ENCODE measurements at regions of chr1 and their contacts with region 1.

Region 1: GRCh38 chr1:247390116-247390791 is 25.7 kb upstream of the NLRP3 start:
- DNase-seq: peak; percentile 92
- ATAC-seq: peak; percentile 98
- H3K4me3 ChIP-seq: no peak overlapping the region
- H3K27ac ChIP-seq: no peak overlapping the region
- H3K4me1 ChIP-seq: peaks cover 33% of the 10 kb centered on the region
- H3K27me3 ChIP-seq: no peaks in the 10 kb centered on the region
- CTCF ChIP-seq: peak; percentile 92 to 95 (median 94)
- EP300 ChIP-seq: peak; percentile 57 to 91; a peak in 3 of 4 replicates
- POLR2A ChIP-seq: no peak
- RAD21 ChIP-seq: peak; percentile 94

Region 2: DNA sequence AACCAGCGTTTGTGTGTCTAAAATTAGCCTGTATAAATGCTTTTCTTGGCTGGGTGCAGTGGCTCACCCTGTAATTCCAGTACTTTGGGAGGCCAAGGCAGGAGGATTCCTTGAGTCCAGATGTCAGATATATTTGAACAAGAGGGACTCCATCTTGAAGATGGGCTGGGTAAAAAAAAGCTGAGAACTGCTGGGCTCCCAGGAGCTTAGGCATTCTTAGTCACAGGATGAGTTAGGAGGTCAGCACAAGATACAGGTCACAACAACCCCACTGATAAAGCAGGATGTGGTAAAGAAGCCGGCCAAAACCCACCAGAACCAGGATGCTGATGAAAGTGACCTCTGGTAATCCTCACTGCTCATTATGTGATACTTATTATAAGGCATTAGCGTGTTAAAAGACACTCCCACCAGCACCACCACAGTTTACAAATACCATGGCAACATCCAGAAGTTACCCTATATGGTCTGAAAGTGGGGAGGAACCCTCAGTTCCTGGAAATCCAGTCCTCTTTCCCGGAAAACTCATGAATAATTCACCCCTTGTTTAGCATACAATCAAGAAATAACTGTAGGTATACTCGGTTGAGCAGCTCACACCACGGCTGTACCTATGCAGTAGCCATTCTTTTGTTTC is 22.4 kb before region 1 on chr1:
- CTCF ChIA-PET with region 1: interaction called, 35 read pairs
- POLR2A ChIA-PET with region 1: interaction called, 3 read pairs
- RAD21 ChIA-PET with region 1: interaction called, 44 read pairs
- SMC1A ChIA-PET with region 1: interaction called, 33 read pairs
- in situ Hi-C with region 1: no loop called
- intact Hi-C with region 1: no loop called
- DNase-seq: no peak
- ATAC-seq: peak; percentile 80
- H3K4me3 ChIP-seq: no peak overlapping the region
- H3K27ac ChIP-seq: no peak overlapping the region
- H3K4me1 ChIP-seq: no peaks in the 10 kb centered on the region
- H3K27me3 ChIP-seq: no peaks in the 10 kb centered on the region
- CTCF ChIP-seq: no peak
- EP300 ChIP-seq: no peak
- POLR2A ChIP-seq: no peak
- RAD21 ChIP-seq: no peak

Region 3: DNA sequence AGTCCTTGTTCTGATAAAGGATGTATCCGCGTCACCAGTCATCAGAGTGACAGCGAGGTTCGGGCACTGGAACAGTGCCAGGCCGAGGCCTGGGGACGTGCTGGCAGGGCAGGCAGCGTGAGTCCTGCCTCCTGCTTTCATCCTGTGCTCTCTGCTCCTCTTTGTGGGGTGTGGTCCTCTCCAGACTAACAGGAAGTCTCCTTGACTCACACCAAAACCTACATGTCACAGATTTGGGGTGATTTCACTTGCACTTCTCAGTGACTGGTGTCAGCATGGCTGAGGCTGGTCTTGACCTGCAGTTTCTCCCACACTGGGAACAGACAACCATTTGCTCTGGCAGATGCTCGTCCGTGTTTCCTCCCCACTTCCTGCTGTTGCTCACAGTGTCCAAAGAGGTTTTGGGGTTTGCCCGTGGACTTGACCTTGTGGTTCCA is 16.9 kb after region 1 on chr1:
- CTCF ChIA-PET with region 1: interaction called, 18 read pairs
- POLR2A ChIA-PET with region 1: interaction called, 3 read pairs
- RAD21 ChIA-PET with region 1: interaction called, 24 read pairs
- SMC1A ChIA-PET with region 1: interaction called, 18 read pairs
- in situ Hi-C with region 1: no loop called
- intact Hi-C with region 1: loop called (anchors 1 kb)
- DNase-seq: peak; percentile 85
- ATAC-seq: peak; percentile 81
- H3K4me3 ChIP-seq: 0 out of 2 replicates have a peak overlapping the region, but pooled peaks have one; percentile 9
- H3K27ac ChIP-seq: peak overlapping the region; percentile 63
- H3K4me1 ChIP-seq: peaks cover 34% of the 10 kb centered on the region
- H3K27me3 ChIP-seq: no peaks in the 10 kb centered on the region
- CTCF ChIP-seq: no peak
- EP300 ChIP-seq: peak in 1 of 2 experiments; percentile 23; a peak in 1 of 4 replicates
- POLR2A ChIP-seq: 0 out of 2 replicates have a peak, but pooled peaks have one; percentile 21
- RAD21 ChIP-seq: no peak

Region 4: DNA sequence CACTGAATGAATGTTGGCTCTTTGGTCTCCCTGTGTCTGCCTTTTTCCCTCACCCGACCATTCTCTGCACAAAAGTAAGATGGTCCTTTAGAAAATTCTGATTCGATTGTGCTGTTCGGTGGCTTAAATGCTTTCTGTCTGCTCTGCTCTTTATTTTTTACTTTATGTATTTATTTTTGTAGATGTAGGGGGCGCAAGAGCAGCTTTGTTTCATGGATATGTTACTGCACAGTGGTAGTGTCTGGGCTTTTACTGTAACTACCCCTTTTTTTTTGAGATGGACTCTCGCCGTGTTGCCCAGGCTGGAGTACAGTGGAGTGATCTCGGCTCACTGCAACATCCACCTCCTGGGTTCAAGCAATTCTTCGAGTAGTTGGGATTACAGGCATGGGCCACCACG is 41.4 kb after region 1 on chr1:
- CTCF ChIA-PET with region 1: interaction called, 27 read pairs
- POLR2A ChIA-PET with region 1: interaction called, 7 read pairs
- RAD21 ChIA-PET with region 1: interaction called, 10 read pairs
- SMC1A ChIA-PET with region 1: interaction called, 80 read pairs
- in situ Hi-C with region 1: no loop called
- intact Hi-C with region 1: loop called (anchors 1 kb)
- DNase-seq: no peak
- ATAC-seq: no peak
- H3K4me3 ChIP-seq: no peak overlapping the region
- H3K27ac ChIP-seq: no peak overlapping the region
- H3K4me1 ChIP-seq: no peaks in the 10 kb centered on the region
- H3K27me3 ChIP-seq: no peaks in the 10 kb centered on the region
- CTCF ChIP-seq: no peak
- EP300 ChIP-seq: no peak
- POLR2A ChIP-seq: no peak
- RAD21 ChIP-seq: no peak

Region 5: DNA sequence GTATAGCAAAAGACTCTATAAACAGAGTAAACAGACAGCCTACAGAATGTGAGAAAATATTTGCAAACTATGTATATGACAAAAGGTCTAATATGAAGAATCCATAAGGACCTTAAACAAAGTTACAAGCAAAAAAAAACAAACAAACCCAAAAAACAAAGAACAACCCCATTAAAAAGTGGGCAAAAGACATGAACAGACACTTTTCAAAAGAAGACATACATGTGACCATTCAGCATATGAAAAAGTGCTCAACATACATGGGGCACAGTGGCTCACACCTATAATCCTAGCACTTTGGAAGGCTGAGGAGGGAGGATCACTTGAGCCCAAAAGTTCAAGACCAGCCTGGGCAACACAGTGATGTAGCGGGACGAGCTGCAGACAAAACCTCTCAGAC is 85.5 kb after region 1 on chr1:
- CTCF ChIA-PET with region 1: interaction called, 49 read pairs
- POLR2A ChIA-PET with region 1: interaction called, 3 read pairs
- RAD21 ChIA-PET with region 1: interaction called, 6 read pairs
- SMC1A ChIA-PET with region 1: interaction called, 13 read pairs
- in situ Hi-C with region 1: loop called (anchors 5 kb)
- intact Hi-C with region 1: no loop called
- DNase-seq: no peak
- ATAC-seq: no peak; the same call in 2 of the 3 replicates
- H3K4me3 ChIP-seq: no peak overlapping the region
- H3K27ac ChIP-seq: peak overlapping the region; percentile 24; the same call in 1 of the 2 replicates
- H3K4me1 ChIP-seq: peaks cover 10% of the 10 kb centered on the region
- H3K27me3 ChIP-seq: no peaks in the 10 kb centered on the region
- CTCF ChIP-seq: no peak
- EP300 ChIP-seq: no peak
- POLR2A ChIP-seq: no peak
- RAD21 ChIP-seq: no peak

Measured in GM12878 (cell line).